ENCODE measurements at regions of chr17 and their contacts with region 1.

Region 1: GRCh38 chr17:77297693-77298666 is 157.2 kb downstream of the SEC14L1 start:
- DNase-seq: no peak

Region 2: DNA sequence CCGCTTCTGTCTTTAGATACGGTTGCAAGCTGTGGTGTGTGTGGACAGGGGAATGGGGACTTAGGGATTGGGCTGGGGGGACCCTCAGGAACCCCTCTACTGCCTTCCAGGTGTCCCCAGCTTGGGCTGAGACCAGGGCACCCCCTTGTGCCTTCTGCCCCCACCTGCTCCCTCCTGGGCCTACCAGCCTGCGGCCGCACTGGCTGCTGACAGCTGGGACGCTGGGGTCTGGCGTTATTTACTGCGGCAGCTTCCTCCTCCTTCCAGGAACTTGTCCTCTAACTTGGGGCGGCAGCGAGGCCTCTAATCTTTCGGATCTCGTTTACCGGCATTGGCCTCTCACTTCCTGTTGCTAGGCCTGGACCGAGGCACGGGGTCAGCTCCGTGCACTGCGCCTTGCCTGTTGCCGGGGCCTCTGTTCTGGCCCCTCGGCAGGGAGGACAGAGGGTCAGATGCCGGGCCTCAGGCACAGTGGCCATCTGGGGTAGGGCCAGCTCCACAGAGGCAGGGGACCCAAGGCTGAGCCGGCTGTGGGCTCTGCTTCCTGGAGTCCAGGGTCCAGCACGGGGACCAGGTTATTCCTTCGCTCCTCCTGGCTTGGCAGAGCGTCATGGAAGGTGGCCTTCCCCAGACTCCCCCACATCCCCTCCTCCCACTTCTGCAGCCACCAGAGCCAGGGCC is 965.2 kb after region 1 on chr17:
- intact Hi-C with region 1: loop called in 1 of 2 experiments (anchors 5 kb)
- DNase-seq: peak; percentile 89

Region 3: GRCh38 chr17:78438271-78438691 is 1140.3 kb after region 1 on chr17:
- intact Hi-C with region 1: loop called in 1 of 2 experiments (anchors 5 kb)
- DNase-seq: no peak